Naive thymus-derived CD4-positive, alpha-beta T cell (primary cell): ENCODE measurements at regions of chr13 and their contacts with region 1.

Region 1: DNA sequence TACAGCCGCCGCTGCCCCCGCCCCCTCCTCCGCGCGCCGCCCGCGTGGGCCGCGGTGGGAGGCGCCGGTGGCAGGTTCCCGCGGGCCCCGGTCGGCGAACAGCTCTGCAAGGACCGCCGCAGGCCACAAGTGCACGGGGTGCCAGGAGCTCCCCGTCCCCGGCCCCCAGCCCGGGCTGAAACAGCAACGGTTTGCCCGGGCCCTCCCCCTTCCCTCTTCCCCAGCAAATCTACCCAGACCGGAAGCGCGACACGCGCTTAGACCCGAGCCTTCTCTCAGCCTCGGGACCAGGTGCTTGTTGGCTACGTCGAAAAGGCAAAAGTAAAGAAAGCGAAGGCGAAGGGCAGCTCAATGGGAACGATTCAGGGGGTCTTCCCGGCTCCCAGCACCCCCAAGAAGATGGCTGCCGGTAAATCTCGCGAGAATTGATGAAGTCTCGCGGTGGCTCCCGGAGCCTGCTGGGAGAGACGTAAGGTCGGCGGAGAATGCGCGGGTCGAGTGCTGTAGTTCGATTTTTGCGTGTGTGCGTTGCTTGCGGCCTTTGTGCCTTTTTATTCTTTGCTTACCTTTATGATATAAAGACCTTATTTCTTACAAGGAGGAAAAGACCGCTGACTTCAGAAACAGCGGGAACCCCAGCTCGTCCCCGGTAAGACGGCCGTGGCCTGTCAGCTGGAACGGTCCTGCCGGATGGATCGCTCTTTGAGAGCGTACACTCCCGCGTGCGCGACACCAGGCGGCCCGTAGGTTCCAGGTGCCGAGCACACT is at the start of gene RBM26:
- DNase-seq: peak; percentile 87 to 96 (median 93)
- ATAC-seq: peak; percentile 92
- H3K4me3 ChIP-seq: peak within 1 kb of the TSS; percentile 93
- H3K4me3 Mint-ChIP-seq: peak within 1 kb of the TSS in 5 of 10 donors; percentile 93 to 97 (median 95)
- H3K27ac ChIP-seq: peak within 1 kb of the TSS; percentile 91
- H3K27ac Mint-ChIP-seq: peak within 1 kb of the TSS in 5 of 9 donors; percentile 97 to 99 (median 99)
- H3K4me1 ChIP-seq: peaks cover 33 to 44% of the 10 kb centered on the region in 2 donors
- H3K4me1 Mint-ChIP-seq: peaks cover 31 to 49% (median 36%) of the 10 kb centered on the region in 7 donors
- H3K27me3 ChIP-seq: no peaks in the 10 kb centered on the region
- H3K27me3 Mint-ChIP-seq: no peaks in the 10 kb centered on the region
- total RNA-seq, gene RBM26: 75.4 to 136 (median 85.2) TPM

Region 2: GRCh38 chr13:78022164-78022877 is 1383.7 kb before region 1 on chr13:
- CTCF ChIA-PET with region 1: no interaction called
- POLR2A ChIA-PET with region 1: no interaction called
- intact Hi-C with region 1: loop called in 1 of 2 experiments (anchors 2 kb)
- DNase-seq: peak in 8 of 9 donors; percentile 9 to 54 (median 34)
- ATAC-seq: peak; percentile 94
- H3K4me3 ChIP-seq: no peak overlapping the region
- H3K4me3 Mint-ChIP-seq: peak overlapping the region in 7 of 10 donors; percentile 1 to 69 (median 5)
- H3K27ac ChIP-seq: no peak overlapping the region
- H3K27ac Mint-ChIP-seq: peak overlapping the region; percentile 0 to 86 (median 35)
- H3K4me1 ChIP-seq: peaks cover 0 to 7% of the 10 kb centered on the region in 2 donors
- H3K4me1 Mint-ChIP-seq: peaks cover 6 to 16% (median 11%) of the 10 kb centered on the region in 7 donors
- H3K27me3 ChIP-seq: no peaks in the 10 kb centered on the region
- H3K27me3 Mint-ChIP-seq: peaks cover 0 to 16% (median 3%) of the 10 kb centered on the region in 5 donors